Common myeloid progenitor, CD34-positive (primary cell): ENCODE measurements at regions of chr14 and their contacts with region 1.

Region 1: DNA sequence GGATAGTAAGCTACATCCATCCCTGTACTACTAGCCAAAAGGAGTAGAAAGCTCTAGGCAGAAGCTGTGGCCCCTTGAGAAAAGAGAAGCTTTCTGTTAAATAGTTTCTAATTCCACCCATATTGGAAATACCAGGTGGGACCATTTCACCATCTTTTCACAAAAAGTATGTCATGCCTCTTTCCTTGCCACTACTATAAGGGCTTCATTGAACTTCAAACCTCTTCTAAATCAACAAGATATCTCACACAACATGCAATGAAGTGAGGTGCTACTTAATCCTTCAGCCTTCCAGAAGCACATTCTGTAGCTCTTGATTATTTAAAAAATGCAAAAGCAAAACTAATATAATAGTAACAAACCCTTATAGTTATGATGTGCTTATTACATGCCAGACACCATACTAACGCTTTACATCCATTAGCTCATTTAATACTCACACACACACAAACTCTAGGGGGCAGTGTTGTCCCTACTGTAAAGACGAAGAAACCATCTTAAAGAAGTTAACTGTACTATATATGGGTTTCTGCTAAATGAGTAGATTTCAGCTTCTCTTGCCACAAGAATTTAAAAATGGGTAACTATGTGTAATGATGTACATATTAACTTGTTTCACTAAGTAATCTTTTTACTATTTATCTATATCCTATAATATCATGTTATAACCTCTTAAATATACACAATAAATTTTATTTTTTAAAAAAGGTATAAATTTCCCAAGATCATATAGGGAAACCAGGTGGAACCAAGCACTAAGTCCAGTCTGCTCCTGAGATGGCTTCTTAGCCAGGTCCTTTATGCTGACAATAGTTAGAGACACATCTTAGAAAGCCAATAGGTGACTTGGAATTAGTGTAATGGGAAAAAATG is 124.4 kb downstream of the RPS29 start:
- DNase-seq: peak; percentile 87 to 94 (median 91)
- H3K4me3 ChIP-seq: no peak overlapping the region
- H3K27ac ChIP-seq: no peak overlapping the region
- H3K4me1 ChIP-seq: peaks cover 0 to 5% (median under 1%) of the 10 kb centered on the region in 4 experiments
- H3K27me3 ChIP-seq: no peaks in the 10 kb centered on the region

Region 2: DNA sequence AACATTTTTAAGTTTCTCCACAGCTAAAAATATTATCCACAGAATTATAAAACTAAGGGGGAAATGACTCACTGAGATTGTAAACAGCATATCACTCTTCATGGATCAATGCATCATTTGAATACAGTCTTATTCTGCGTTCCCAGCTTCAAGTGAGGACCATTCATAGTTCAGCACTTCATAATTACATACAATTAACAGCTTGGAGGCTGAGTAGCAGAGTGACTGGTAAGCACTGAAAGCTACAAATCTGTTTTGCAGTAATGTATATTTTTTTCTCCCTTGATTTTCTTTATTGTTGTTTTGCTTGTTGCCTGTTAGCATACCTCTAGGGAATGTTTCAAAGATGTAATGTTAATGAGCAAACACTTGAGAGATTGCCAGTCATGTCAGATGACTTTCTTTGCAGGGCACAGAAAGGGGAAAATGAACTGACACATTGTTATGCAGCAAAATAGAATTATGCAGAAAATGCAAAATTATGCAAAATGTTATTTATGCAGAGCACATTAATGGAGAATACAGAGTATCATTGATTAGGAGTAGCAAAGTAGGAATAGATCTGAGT is 14.1 kb before region 1 on chr14:
- CTCF ChIA-PET with region 1: interaction called, 23 read pairs
- POLR2A ChIA-PET with region 1: no interaction called
- DNase-seq: no peak
- H3K4me3 ChIP-seq: no peak overlapping the region
- H3K27ac ChIP-seq: no peak overlapping the region
- H3K4me1 ChIP-seq: no peaks in the 10 kb centered on the region
- H3K27me3 ChIP-seq: no peaks in the 10 kb centered on the region

Region 3: GRCh38 chr14:49485290-49485689 is 23.5 kb after region 1 on chr14:
- CTCF ChIA-PET with region 1: interaction called, 15 read pairs
- POLR2A ChIA-PET with region 1: no interaction called
- DNase-seq: no peak
- H3K4me3 ChIP-seq: no peak overlapping the region
- H3K27ac ChIP-seq: no peak overlapping the region
- H3K4me1 ChIP-seq: peaks cover 7 to 20% (median 15%) of the 10 kb centered on the region in 4 experiments
- H3K27me3 ChIP-seq: no peaks in the 10 kb centered on the region

Region 4: DNA sequence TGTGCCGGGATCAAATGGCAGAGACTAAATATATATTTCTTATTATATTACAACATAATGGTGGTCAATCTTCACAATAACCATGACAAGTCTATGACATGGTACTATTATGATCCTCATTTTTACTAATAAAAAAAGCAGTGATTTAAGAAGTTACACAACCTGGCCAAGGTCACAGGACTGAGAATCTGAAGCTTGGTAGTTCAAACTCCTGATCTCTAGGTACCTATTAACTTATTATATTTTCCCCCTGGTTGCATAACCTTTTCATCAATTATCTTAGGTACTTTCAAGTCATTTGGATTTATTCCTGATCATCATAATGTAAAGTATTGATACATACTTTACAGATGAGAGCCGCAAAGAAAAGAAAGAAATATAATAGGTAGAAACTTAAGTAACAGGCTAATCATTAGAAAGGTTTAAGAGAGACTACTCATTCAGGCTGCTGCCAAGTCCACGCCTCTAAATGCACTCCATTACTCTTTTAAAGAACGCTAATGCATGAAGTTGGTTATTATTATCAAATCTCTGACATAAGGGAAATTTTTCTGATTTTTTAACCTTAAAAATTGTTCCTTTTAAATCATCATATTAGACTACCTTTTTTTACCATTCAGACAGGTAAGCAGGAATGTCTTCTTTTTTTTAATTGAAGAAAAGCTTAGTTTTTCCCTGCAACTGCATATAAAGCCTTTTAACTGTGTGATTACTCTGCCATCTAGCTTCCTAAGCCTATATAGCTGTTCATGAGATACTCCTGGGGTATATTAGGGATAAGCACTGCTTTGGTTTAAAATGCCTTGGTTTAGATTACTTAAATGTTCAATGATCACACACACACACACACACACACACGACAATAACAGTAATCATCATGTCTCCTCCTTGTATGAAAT is 88.8 kb after region 1 on chr14:
- CTCF ChIA-PET with region 1: interaction called, 58 read pairs
- POLR2A ChIA-PET with region 1: no interaction called
- DNase-seq: peak; percentile 22 to 38 (median 31)
- H3K4me3 ChIP-seq: no peak overlapping the region
- H3K27ac ChIP-seq: no peak overlapping the region
- H3K4me1 ChIP-seq: peaks cover 0 to 4% (median under 1%) of the 10 kb centered on the region in 4 experiments
- H3K27me3 ChIP-seq: no peaks in the 10 kb centered on the region